ENCODE measurements at regions of chr6 and their contacts with region 1.

Region 1: GRCh38 chr6:159693128-159693893 is at the start of gene SOD2:
- DNase-seq: peak; percentile 86 to 95 (median 92)
- H3K4me3 ChIP-seq: peak within 1 kb of the TSS; percentile 81 to 94 (median 86)
- H3K27ac ChIP-seq: peak within 1 kb of the TSS; percentile 87 to 90
- H3K4me1 ChIP-seq: peaks cover 23 to 75% (median 38%) of the 10 kb centered on the region in 4 experiments
- H3K27me3 ChIP-seq: no peaks in the 10 kb centered on the region

Region 2: GRCh38 chr6:159608961-159609651 is 84.2 kb before region 1 on chr6:
- CTCF ChIA-PET with region 1: no interaction called
- POLR2A ChIA-PET with region 1: no interaction called
- DNase-seq: peak; percentile 24 to 30 (median 27)
- H3K4me3 ChIP-seq: no peak overlapping the region
- H3K27ac ChIP-seq: no peak overlapping the region
- H3K4me1 ChIP-seq: no peaks in the 10 kb centered on the region
- H3K27me3 ChIP-seq: peaks cover 0 to 3% (median 0%) of the 10 kb centered on the region in 5 experiments

Region 3: DNA sequence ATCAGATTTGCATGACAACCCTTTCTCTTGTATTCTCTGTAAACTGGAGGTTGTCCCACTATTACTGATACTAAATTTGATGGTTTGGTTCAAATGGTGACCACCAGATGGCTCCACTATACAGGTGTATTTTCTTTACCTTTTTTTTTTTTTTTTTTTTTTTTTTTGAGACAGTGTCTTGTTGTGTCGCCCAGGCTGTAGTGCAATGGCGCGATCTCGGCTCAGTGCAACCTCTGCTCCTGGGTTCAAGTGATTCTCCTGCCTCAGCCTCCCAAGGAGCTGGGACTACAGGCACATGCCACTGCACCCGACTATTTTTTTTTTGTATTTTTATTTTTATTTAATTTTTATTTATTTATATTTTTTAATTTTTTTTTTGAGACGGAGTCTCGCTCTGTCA is 27.4 kb after region 1 on chr6:
- CTCF ChIA-PET with region 1: interaction called, 41 read pairs
- POLR2A ChIA-PET with region 1: interaction called, 46 read pairs
- DNase-seq: peak; percentile 55 to 65 (median 61)
- H3K4me3 ChIP-seq: no peak overlapping the region
- H3K27ac ChIP-seq: no peak overlapping the region
- H3K4me1 ChIP-seq: peaks cover 4 to 21% (median 9%) of the 10 kb centered on the region in 4 experiments
- H3K27me3 ChIP-seq: no peaks in the 10 kb centered on the region

Region 4: GRCh38 chr6:159739341-159739740 is 46.0 kb after region 1 on chr6:
- CTCF ChIA-PET with region 1: interaction called, 28 read pairs
- POLR2A ChIA-PET with region 1: no interaction called
- DNase-seq: no peak
- H3K4me3 ChIP-seq: no peak overlapping the region
- H3K27ac ChIP-seq: peak overlapping the region in 1 of 2 experiments; percentile 39
- H3K4me1 ChIP-seq: peaks cover 0 to 2% (median 0%) of the 10 kb centered on the region in 4 experiments
- H3K27me3 ChIP-seq: no peaks in the 10 kb centered on the region

Region 5: DNA sequence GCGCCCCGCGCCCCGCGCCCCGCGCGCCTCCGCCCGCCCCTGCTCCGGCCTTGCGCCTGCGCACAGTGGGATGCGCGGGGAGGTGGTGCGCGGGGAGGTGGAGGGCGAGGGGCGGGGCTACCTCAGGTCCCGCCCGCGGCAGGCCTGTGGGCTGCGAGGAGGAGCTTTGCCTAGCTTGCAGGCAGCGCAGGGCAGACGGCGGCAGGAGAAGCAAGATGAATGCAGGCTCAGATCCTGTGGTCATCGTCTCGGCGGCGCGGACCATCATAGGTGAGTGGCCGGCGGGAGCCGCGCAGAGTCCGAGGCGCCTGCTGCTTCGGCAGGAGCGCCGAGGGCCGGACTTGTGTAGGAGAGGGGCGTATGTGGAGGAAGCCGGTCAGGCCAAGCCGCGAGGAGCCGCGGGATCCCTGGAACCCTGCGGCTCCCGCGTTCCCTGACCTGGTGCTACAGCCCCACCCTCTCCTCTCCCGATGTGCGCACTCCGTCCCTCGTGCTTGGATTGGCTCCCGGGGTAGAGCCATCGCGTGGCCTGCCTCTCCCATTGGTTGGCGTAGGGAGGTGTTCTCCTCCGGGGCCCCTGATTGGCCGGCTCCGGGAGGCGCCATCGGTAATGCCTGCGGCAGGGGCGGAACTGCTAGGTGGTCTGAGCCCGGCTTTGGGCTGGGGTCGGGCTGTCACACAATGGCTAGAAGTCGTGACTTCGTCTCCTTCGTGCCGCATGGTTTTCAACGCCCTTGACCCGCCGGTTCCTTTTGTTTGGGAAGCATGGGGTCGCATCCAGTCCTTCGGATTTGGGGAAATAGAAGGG is 68.8 kb after region 1 on chr6 and contains the start of gene ACAT2:
- CTCF ChIA-PET with region 1: interaction called, 6 read pairs
- POLR2A ChIA-PET with region 1: interaction called, 12 read pairs
- DNase-seq: peak; percentile 93 to 95 (median 95)
- H3K4me3 ChIP-seq: peak within 1 kb of the TSS; percentile 83 to 92 (median 89)
- H3K27ac ChIP-seq: peak within 1 kb of the TSS; percentile 84 to 97
- H3K4me1 ChIP-seq: peaks cover 11 to 34% (median 23%) of the 10 kb centered on the region in 4 experiments
- H3K27me3 ChIP-seq: no peaks in the 10 kb centered on the region

Region 6: GRCh38 chr6:159842035-159842434 is 148.7 kb after region 1 on chr6:
- CTCF ChIA-PET with region 1: no interaction called
- POLR2A ChIA-PET with region 1: no interaction called
- DNase-seq: no peak
- H3K4me3 ChIP-seq: no peak overlapping the region
- H3K27ac ChIP-seq: no peak overlapping the region
- H3K4me1 ChIP-seq: peaks cover 0 to 13% (median 0%) of the 10 kb centered on the region in 4 experiments
- H3K27me3 ChIP-seq: no peaks in the 10 kb centered on the region

Region 7: DNA sequence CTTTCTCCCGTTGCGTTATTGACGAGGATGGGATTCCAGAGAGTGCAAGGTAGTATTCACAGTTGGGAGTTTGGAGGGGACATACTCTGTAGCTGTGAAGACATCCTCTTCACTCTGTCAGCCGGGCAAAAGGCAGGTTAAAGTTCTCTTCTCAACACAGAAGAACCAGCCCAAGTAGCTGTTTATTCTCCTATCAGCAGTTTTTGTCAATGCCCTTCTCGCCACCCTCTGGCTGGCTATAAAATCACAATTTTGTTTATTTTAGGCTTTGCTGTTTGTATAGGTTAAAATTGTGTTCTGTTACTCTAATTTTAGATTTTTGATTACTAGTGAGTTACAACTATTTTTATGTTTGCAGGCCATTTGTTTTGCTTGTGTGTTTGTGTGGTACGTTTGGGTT is 159.6 kb after region 1 on chr6:
- CTCF ChIA-PET with region 1: interaction called, 22 read pairs
- POLR2A ChIA-PET with region 1: interaction called, 4 read pairs
- DNase-seq: peak; percentile 40 to 60 (median 58)
- H3K4me3 ChIP-seq: no peak overlapping the region
- H3K27ac ChIP-seq: no peak overlapping the region
- H3K4me1 ChIP-seq: peaks cover 0 to 4% (median 1%) of the 10 kb centered on the region in 4 experiments
- H3K27me3 ChIP-seq: no peaks in the 10 kb centered on the region